Heart left ventricle (tissue), 16 donors: ENCODE measurements at regions of chr10 and their contacts with region 1.

Region 1: DNA sequence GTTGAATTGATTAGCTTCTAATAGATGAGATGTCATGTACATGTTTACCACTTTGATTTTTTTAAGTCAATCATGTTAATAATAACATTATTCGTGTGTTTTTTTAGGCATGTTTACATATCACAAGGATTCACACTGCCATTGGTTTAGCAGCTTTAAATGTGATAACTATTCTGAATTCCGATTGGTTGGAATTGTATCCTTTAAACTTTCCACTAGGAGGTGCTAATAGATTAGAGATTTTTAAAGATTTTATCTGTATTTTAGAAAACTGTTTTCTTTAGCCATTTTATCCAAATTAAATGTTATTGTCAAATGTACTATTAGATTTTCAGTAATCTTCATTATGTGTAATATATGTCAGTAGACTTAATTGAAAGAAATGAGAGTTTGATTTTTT is 83.2 kb downstream of the HECTD2 start:
- DNase-seq: no peak
- ATAC-seq: no peak
- H3K4me3 ChIP-seq: no peak overlapping the region
- H3K27ac ChIP-seq: no peak overlapping the region
- H3K4me1 ChIP-seq: peaks cover 0 to 3% (median 0%) of the 10 kb centered on the region in 12 donors
- H3K27me3 ChIP-seq: no peaks in the 10 kb centered on the region
- CTCF ChIP-seq: peak; percentile 26 to 71 (median 58)
- POLR2A ChIP-seq: no peak

Region 2: DNA sequence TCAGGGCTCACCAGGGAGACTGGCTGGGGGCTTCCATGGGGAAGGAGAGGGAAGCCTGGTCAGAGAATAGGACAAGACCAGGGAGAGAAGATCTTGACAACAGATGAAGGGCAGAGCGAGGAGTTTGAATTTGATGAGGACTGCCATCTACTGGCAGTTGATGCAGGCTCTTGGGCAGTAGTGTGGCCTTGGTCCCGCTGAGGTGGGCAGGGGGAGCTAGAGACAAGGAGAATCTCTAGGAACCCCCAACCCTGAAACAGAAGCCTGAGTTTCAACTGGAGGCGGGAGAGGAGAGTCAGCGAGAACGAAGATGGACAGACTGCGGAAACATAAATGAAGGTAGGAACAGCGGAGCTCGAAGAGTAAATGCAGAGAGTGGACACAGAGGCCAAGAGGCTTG is 58.5 kb after region 1 on chr10:
- intact Hi-C with region 1: loop called in 8 of 10 experiments (anchors 2 to 10 kb)
- DNase-seq: peak in 4 of 5 donors; percentile 49 to 66 (median 54)
- ATAC-seq: peak; percentile 72 to 87 (median 81)
- H3K4me3 ChIP-seq: peak overlapping the region in 8 of 12 donors; percentile 21 to 49 (median 33)
- H3K27ac ChIP-seq: peak overlapping the region in 6 of 12 donors; percentile 18 to 73 (median 44)
- H3K4me1 ChIP-seq: peaks cover 0 to 21% (median 4%) of the 10 kb centered on the region in 12 donors
- H3K27me3 ChIP-seq: no peaks in the 10 kb centered on the region
- CTCF ChIP-seq: peak; percentile 39 to 86 (median 65)
- POLR2A ChIP-seq: no peak